ENCODE measurements at regions of chrX and their contacts with region 1.

Region 1: GRCh38 chrX:78517124-78517523 is 142.0 kb downstream of the RTL3 start:
- DNase-seq: no peak
- ATAC-seq: peak; percentile 82
- H3K4me3 Mint-ChIP-seq: no peak overlapping the region
- H3K27ac Mint-ChIP-seq: peak overlapping the region; percentile 70
- H3K4me1 Mint-ChIP-seq: peaks cover 28% of the 10 kb centered on the region
- H3K27me3 Mint-ChIP-seq: no peaks in the 10 kb centered on the region
- CTCF ChIP-seq: no peak

Region 2: GRCh38 chrX:78011846-78012245 is 505.3 kb before region 1 on chrX:
- CTCF ChIA-PET with region 1: no interaction called
- POLR2A ChIA-PET with region 1: no interaction called
- intact Hi-C with region 1: no loop called
- DNase-seq: no peak
- ATAC-seq: no peak
- H3K4me3 Mint-ChIP-seq: no peak overlapping the region
- H3K27ac Mint-ChIP-seq: no peak overlapping the region
- H3K4me1 Mint-ChIP-seq: no peaks in the 10 kb centered on the region
- H3K27me3 Mint-ChIP-seq: no peaks in the 10 kb centered on the region
- CTCF ChIP-seq: no peak

Region 3: DNA sequence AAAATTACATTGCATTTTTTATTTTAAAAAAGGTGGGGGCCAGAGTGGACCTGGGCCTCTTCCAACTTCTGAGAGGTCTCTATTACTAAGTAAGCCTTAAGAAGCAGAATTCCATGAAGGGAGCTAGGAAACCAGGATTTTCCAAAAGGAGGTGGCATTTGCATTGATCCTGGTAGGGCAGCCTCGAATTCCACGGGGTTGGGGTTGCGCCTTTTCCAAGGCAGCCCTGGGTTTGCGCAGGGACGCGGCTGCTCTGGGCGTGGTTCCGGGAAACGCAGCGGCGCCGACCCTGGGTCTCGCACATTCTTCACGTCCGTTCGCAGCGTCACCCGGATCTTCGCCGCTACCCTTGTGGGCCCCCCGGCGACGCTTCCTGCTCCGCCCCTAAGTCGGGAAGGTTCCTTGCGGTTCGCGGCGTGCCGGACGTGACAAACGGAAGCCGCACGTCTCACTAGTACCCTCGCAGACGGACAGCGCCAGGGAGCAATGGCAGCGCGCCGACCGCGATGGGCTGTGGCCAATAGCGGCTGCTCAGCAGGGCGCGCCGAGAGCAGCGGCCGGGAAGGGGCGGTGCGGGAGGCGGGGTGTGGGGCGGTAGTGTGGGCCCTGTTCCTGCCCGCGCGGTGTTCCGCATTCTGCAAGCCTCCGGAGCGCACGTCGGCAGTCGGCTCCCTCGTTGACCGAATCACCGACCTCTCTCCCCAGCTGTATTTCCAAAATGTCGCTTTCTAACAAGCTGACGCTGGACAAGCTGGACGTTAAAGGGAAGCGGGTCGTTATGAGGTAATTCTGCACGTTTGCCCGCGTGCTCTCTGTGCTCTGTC is 413.3 kb before region 1 on chrX and contains the start of gene PGK1:
- CTCF ChIA-PET with region 1: no interaction called
- POLR2A ChIA-PET with region 1: interaction called, 3 read pairs
- intact Hi-C with region 1: loop called (anchors 10 kb)
- DNase-seq: peak; percentile 81
- ATAC-seq: peak; percentile 95
- H3K4me3 Mint-ChIP-seq: peak within 1 kb of the TSS; percentile 87
- H3K27ac Mint-ChIP-seq: peak within 1 kb of the TSS; percentile 90
- H3K4me1 Mint-ChIP-seq: peaks cover 41% of the 10 kb centered on the region
- H3K27me3 Mint-ChIP-seq: peaks cover 2% of the 10 kb centered on the region
- CTCF ChIP-seq: no peak
- total RNA-seq, gene PGK1: 293 and 295 TPM in 2 replicates

Region 4: GRCh38 chrX:78139160-78140123 is 377.7 kb before region 1 on chrX and contains the start of gene TAF9B:
- CTCF ChIA-PET with region 1: no interaction called
- POLR2A ChIA-PET with region 1: no interaction called
- intact Hi-C with region 1: loop called (anchors 10 kb)
- DNase-seq: peak; percentile 66
- ATAC-seq: peak; percentile 93
- H3K4me3 Mint-ChIP-seq: peak within 1 kb of the TSS; percentile 92
- H3K27ac Mint-ChIP-seq: peak within 1 kb of the TSS; percentile 77
- H3K4me1 Mint-ChIP-seq: no peaks in the 10 kb centered on the region
- H3K27me3 Mint-ChIP-seq: no peaks in the 10 kb centered on the region
- CTCF ChIP-seq: no peak
- total RNA-seq, gene TAF9B: 16.2 and 17.4 TPM in 2 replicates

Region 5: DNA sequence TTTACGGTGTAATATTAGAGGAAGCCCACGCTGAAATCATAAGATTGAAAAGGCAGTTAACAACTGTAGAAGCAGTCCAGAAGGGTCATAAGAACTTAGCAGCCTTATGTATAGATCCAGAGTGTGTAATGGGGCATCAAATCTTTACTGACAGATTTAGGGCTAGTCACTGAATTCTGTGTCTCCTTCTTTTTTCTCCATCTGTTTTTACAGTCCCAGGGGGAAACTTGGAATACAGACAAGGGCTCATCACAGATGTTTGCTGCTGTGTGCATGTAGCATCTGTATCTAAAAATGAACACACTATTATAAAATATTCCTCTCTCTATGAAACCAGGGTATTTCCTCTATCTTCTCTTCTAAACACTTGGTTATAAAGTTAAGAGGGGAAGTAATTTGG is 233.6 kb before region 1 on chrX:
- CTCF ChIA-PET with region 1: no interaction called
- POLR2A ChIA-PET with region 1: no interaction called
- intact Hi-C with region 1: loop called (anchors 10 kb)
- DNase-seq: no peak
- ATAC-seq: no peak
- H3K4me3 Mint-ChIP-seq: no peak overlapping the region
- H3K27ac Mint-ChIP-seq: no peak overlapping the region
- H3K4me1 Mint-ChIP-seq: peaks cover 6% of the 10 kb centered on the region
- H3K27me3 Mint-ChIP-seq: no peaks in the 10 kb centered on the region
- CTCF ChIP-seq: no peak

Region 6: GRCh38 chrX:78321809-78322208 is 195.3 kb before region 1 on chrX:
- CTCF ChIA-PET with region 1: no interaction called
- POLR2A ChIA-PET with region 1: no interaction called
- intact Hi-C with region 1: loop called (anchors 2 kb)
- DNase-seq: peak; percentile 24
- ATAC-seq: peak; percentile 93
- H3K4me3 Mint-ChIP-seq: peak overlapping the region; percentile 41
- H3K27ac Mint-ChIP-seq: peak overlapping the region; percentile 77
- H3K4me1 Mint-ChIP-seq: peaks cover 61% of the 10 kb centered on the region
- H3K27me3 Mint-ChIP-seq: no peaks in the 10 kb centered on the region
- CTCF ChIP-seq: no peak

Region 7: GRCh38 chrX:78327370-78328086 is 189.6 kb before region 1 on chrX and contains the start of gene CYSLTR1:
- CTCF ChIA-PET with region 1: no interaction called
- POLR2A ChIA-PET with region 1: no interaction called
- intact Hi-C with region 1: loop called (anchors 2 kb)
- DNase-seq: no peak
- ATAC-seq: peak; percentile 64
- H3K4me3 Mint-ChIP-seq: peak within 1 kb of the TSS; percentile 89
- H3K27ac Mint-ChIP-seq: peak within 1 kb of the TSS; percentile 94
- H3K4me1 Mint-ChIP-seq: peaks cover 74% of the 10 kb centered on the region
- H3K27me3 Mint-ChIP-seq: no peaks in the 10 kb centered on the region
- CTCF ChIP-seq: no peak
- total RNA-seq, gene CYSLTR1: 20.5 and 20.7 TPM in 2 replicates

Region 8: GRCh38 chrX:78476701-78477100 is 40.4 kb before region 1 on chrX:
- CTCF ChIA-PET with region 1: no interaction called
- POLR2A ChIA-PET with region 1: no interaction called
- intact Hi-C with region 1: no loop called
- DNase-seq: no peak
- ATAC-seq: no peak
- H3K4me3 Mint-ChIP-seq: no peak overlapping the region
- H3K27ac Mint-ChIP-seq: no peak overlapping the region
- H3K4me1 Mint-ChIP-seq: no peaks in the 10 kb centered on the region
- H3K27me3 Mint-ChIP-seq: peaks cover 6% of the 10 kb centered on the region
- CTCF ChIP-seq: no peak

Measured in activated B cell treated with CpG ODN at 0.5 μM for 24 hours (primary cell).